ENCODE measurements at regions of chr2 and their contacts with region 1.

Region 1: DNA sequence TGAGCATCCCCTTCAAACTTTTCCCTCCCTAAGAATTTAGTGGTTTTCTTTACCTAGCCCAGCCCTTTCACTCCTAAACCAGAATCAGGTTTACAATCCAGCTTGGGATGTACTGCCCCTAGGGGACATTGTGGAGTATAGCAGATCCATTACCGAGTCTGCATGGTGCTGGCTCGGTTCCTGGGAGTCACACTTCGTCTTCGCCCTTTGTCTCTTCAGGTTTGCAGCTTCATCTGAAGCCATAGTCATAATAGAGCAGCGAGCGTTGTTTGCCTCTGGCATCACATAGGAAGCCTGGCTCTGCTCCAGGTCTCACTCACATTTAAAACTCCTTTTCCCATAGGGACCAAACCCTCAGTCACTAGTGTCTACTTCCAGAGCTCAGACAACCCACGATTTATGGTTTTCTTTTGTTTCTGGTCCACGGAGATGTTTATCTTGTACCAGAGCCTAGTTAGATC is 16.8 kb upstream of the LYPD6 start:
- DNase-seq: peak in 1 of 2 experiments; percentile 56
- H3K4me3 ChIP-seq: no peak overlapping the region
- H3K4me3 Mint-ChIP-seq: no peak overlapping the region
- H3K27ac Mint-ChIP-seq: no peak overlapping the region
- H3K4me1 ChIP-seq: 0 out of 2 replicates have a peak, but pooled peaks cover 4% of the 10 kb centered on the region
- H3K4me1 Mint-ChIP-seq: peaks cover 28% of the 10 kb centered on the region
- H3K27me3 ChIP-seq: no peaks in the 10 kb centered on the region
- H3K27me3 Mint-ChIP-seq: no peaks in the 10 kb centered on the region
- CTCF ChIP-seq: peak; percentile 82 to 84

Region 2: DNA sequence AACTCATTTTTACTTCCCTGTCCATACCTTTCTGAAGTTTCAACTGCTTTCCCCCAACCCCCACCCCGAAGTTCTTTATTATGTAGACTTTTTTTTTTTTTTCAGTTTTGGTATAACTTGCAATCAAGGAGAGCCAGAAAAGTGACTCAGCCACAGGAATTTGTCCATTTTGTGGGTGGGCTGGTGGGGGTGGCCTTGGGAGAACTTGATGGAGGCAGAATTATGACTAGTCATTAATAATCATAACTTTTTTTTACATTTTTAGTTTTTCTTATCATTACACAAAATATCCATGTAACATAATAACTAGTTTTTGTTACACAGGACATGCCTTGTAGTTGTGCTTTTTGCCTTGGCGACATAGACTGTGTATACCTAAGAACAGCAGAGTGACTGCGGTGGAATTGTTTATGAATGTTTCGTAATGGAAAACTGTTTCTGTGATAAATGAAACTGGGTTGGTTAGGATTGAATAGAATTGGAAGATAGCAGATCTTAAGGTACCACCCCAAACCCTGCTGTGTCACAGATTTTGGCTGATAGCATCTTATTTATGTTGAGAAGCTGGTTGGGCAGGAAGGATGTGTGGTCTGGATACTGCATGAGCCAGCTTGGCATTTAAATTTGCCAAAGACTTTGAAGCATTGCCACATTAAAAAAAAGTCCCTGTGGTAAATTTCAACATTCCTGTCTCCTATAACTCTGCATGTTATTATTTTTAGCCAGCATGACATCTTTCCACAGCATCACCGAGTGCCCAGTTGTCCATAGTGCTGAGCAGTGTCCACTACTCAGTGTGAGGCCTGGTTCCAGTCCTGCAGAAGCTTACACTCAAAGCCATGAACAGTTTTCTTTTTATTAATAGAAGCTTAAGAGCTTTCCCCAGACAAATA is 244.3 kb before region 1 on chr2:
- CTCF ChIA-PET with region 1: no interaction called
- POLR2A ChIA-PET with region 1: no interaction called
- intact Hi-C with region 1: no loop called
- DNase-seq: no peak
- H3K4me3 ChIP-seq: no peak overlapping the region
- H3K4me3 Mint-ChIP-seq: no peak overlapping the region
- H3K27ac Mint-ChIP-seq: peak overlapping the region; percentile 80
- H3K4me1 ChIP-seq: peaks cover 41% of the 10 kb centered on the region
- H3K4me1 Mint-ChIP-seq: peaks cover 60% of the 10 kb centered on the region
- H3K27me3 ChIP-seq: no peaks in the 10 kb centered on the region; the same call in 1 of the 2 replicates
- H3K27me3 Mint-ChIP-seq: no peaks in the 10 kb centered on the region
- CTCF ChIP-seq: no peak

Region 3: DNA sequence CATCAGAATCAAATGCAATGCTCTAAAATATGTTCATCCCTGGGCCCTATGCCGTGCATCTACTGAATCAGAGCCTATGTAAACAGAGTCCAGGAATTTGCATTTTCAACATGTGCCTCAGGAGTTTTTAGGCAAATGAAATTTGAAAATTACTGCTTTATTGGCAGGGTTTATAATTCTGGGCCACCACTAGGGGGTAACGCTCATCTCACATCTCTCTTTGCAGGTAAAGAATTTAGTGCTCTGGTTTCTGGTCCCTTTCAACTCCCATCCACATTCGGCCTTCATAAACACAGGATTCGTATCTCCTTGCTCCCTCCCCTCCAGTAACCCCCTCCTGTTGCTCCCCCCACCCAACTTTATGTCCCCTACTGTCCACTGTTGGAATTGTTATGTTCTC is 225.8 kb before region 1 on chr2:
- CTCF ChIA-PET with region 1: no interaction called
- POLR2A ChIA-PET with region 1: no interaction called
- intact Hi-C with region 1: loop called (anchors 5 kb)
- DNase-seq: peak in 1 of 2 experiments; percentile 45
- H3K4me3 ChIP-seq: no peak overlapping the region
- H3K4me3 Mint-ChIP-seq: no peak overlapping the region
- H3K27ac Mint-ChIP-seq: no peak overlapping the region
- H3K4me1 ChIP-seq: no peaks in the 10 kb centered on the region
- H3K4me1 Mint-ChIP-seq: no peaks in the 10 kb centered on the region
- H3K27me3 ChIP-seq: no peaks in the 10 kb centered on the region
- H3K27me3 Mint-ChIP-seq: no peaks in the 10 kb centered on the region
- CTCF ChIP-seq: peak; percentile 50 to 68

Region 4: DNA sequence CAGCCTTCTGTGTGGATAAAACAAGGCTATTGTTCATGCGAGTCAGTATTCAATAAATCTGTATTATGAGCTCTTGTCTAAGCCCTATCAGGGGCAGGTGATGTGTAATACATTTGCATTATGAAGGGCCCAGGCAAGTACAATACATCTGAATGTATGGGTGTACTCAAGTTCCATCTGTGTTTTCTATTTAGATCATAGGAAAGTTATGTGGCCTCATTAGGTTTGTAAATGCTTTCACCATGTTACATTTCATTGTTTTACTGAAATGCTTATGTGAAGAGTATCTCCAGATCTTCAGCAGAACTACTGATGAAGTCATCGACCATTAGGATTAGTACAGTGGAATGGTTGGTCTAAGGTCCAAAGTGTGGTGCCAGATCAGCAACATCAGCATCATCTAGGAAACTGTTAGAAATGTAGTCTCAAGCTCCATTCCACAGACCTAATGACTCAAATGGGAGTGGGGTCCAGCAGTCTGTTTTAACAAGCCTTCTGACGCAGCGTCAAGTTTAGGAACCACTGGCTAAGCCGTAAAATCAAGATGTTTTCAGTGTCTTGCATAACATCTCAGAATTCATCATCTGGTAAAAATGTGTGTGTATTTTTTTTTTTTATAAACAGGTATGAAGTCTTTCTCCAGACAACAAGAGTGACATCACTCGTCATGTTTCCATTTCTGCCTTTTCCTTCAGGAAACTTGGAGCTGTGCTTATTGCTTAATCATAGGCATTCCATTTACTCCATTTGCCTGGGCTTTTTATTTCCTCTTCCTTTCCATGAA is 97.4 kb after region 1 on chr2:
- CTCF ChIA-PET with region 1: no interaction called
- POLR2A ChIA-PET with region 1: no interaction called
- intact Hi-C with region 1: no loop called
- DNase-seq: no peak
- H3K4me3 ChIP-seq: no peak overlapping the region
- H3K4me3 Mint-ChIP-seq: no peak overlapping the region
- H3K27ac Mint-ChIP-seq: no peak overlapping the region
- H3K4me1 ChIP-seq: 0 out of 2 replicates have a peak, but pooled peaks cover 2% of the 10 kb centered on the region
- H3K4me1 Mint-ChIP-seq: no peaks in the 10 kb centered on the region
- H3K27me3 ChIP-seq: no peaks in the 10 kb centered on the region
- H3K27me3 Mint-ChIP-seq: no peaks in the 10 kb centered on the region
- CTCF ChIP-seq: no peak

Region 5: GRCh38 chr2:149507974-149508373 is 194.4 kb after region 1 on chr2:
- CTCF ChIA-PET with region 1: no interaction called
- POLR2A ChIA-PET with region 1: no interaction called
- intact Hi-C with region 1: no loop called
- DNase-seq: no peak
- H3K4me3 ChIP-seq: no peak overlapping the region
- H3K4me3 Mint-ChIP-seq: no peak overlapping the region
- H3K27ac Mint-ChIP-seq: no peak overlapping the region
- H3K4me1 ChIP-seq: peaks cover 5% of the 10 kb centered on the region; the same call in 1 of the 2 replicates
- H3K4me1 Mint-ChIP-seq: peaks cover 12% of the 10 kb centered on the region
- H3K27me3 ChIP-seq: no peaks in the 10 kb centered on the region
- H3K27me3 Mint-ChIP-seq: no peaks in the 10 kb centered on the region
- CTCF ChIP-seq: no peak

Region 6: DNA sequence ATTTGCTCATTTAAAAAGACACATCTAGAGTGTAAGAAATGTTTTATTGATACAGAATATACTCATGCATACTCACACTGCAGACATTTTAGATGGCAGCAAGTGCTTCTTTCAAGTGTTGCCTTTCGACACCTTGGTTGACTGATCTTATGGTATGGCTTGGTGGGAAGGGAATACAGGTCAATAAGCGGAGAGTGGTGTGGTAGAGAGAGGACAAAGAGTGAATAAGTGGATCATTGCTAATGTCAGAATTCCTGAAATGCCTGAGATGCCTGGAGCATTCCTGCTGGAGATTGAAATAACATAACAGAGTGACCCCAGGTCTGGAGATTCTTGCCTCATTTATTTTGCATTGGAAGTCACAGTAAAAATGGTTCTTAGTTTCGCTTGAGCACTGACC is 1097.3 kb after region 1 on chr2:
- CTCF ChIA-PET with region 1: no interaction called
- POLR2A ChIA-PET with region 1: no interaction called
- intact Hi-C with region 1: no loop called
- DNase-seq: peak; percentile 68 to 77
- H3K4me3 ChIP-seq: no peak overlapping the region
- H3K4me3 Mint-ChIP-seq: peak overlapping the region; percentile 20
- H3K27ac Mint-ChIP-seq: peak overlapping the region; percentile 80
- H3K4me1 ChIP-seq: peaks cover 68% of the 10 kb centered on the region
- H3K4me1 Mint-ChIP-seq: peaks cover 54% of the 10 kb centered on the region
- H3K27me3 ChIP-seq: no peaks in the 10 kb centered on the region
- H3K27me3 Mint-ChIP-seq: no peaks in the 10 kb centered on the region
- CTCF ChIP-seq: no peak

Measured in Caco-2 (cell line).